ENCODE measurements at regions of chr17 and their contacts with region 1.

Region 1: GRCh38 chr17:45021607-45022287 is 29.7 kb downstream of the DCAKD start:
- DNase-seq: peak; percentile 67 to 87 (median 73)
- ATAC-seq: peak in 3 of 4 donors; percentile 80 to 82 (median 82)
- H3K4me3 ChIP-seq: peak overlapping the region in 11 of 12 donors; percentile 29 to 68 (median 46)
- H3K27ac ChIP-seq: peak overlapping the region in 11 of 12 donors; percentile 1 to 79 (median 68)
- H3K4me1 ChIP-seq: peaks cover 0 to 46% (median 31%) of the 10 kb centered on the region in 12 donors
- H3K27me3 ChIP-seq: peaks cover 0 to 27% (median 0%) of the 10 kb centered on the region in 9 donors
- CTCF ChIP-seq: peak; percentile 67 to 98 (median 96)
- POLR2A ChIP-seq: peak in 1 of 2 donors; percentile 14

Region 2: GRCh38 chr17:44900894-44901293 is 120.9 kb before region 1 on chr17:
- intact Hi-C with region 1: loop called in 1 of 10 experiments (anchors 5 kb)
- DNase-seq: no peak
- ATAC-seq: peak in 1 of 4 donors; percentile 5
- H3K4me3 ChIP-seq: no peak overlapping the region
- H3K27ac ChIP-seq: no peak overlapping the region
- H3K4me1 ChIP-seq: peaks cover 0 to 53% (median 24%) of the 10 kb centered on the region in 12 donors
- H3K27me3 ChIP-seq: no peaks in the 10 kb centered on the region
- CTCF ChIP-seq: no peak
- POLR2A ChIP-seq: no peak

Region 3: DNA sequence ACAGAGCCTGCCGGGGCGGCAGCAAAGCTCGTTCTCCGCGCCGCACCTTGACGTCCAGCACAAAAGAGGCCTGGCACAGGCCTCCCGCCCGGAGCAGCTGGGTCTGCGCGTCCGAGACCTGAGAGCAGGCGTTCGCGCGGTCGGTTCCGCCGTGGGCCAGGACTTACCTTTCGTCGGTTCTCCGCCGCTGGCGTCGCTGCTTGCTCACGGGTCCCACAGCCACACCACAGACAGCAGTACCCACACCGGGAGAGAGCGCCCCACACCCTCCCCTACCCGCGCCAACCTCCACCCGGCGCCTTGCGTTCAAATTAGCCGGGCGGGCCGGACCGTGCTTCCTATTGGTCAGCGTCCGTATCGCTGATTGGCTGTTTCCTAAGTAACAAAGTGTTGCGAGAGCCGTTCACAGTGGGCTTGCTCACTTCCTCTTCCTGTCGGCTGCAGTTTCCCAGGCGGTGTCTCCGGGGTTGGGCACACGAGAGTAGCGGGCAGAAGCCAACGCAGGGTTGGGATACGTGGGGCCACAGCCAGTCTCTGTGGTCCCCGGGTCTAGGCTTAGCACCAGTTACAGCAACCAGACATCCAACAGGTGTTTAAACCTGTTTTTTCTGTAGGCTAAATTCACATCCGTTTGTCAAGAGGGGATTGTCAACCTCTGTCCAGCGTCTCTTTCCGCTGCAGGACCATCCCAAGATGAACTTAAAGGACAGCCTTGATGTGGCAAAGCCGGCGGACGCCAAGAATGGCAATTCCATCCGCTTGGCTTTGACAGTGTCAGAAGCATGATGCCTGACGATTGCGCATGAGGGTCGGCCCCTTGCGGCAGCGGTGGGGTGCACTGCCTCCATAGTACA is 74.1 kb before region 1 on chr17 and contains the start of gene KIF18B:
- intact Hi-C with region 1: loop called in 1 of 10 experiments (anchors 2 kb)
- DNase-seq: peak; percentile 89 to 91 (median 90)
- ATAC-seq: peak; percentile 93 to 100 (median 100)
- H3K4me3 ChIP-seq: peak within 1 kb of the TSS; percentile 22 to 80 (median 59)
- H3K27ac ChIP-seq: peak within 1 kb of the TSS in 10 of 12 donors; percentile 19 to 73 (median 62)
- H3K4me1 ChIP-seq: peaks cover 0 to 22% (median 9%) of the 10 kb centered on the region in 12 donors
- H3K27me3 ChIP-seq: no peaks in the 10 kb centered on the region
- CTCF ChIP-seq: no peak
- POLR2A ChIP-seq: peak in 1 of 2 donors; percentile 88
- total RNA-seq, gene KIF18B: 0.06 to 5.4 (median 0.44) TPM in 8 of 9 donors, not detected in the other

Region 4: DNA sequence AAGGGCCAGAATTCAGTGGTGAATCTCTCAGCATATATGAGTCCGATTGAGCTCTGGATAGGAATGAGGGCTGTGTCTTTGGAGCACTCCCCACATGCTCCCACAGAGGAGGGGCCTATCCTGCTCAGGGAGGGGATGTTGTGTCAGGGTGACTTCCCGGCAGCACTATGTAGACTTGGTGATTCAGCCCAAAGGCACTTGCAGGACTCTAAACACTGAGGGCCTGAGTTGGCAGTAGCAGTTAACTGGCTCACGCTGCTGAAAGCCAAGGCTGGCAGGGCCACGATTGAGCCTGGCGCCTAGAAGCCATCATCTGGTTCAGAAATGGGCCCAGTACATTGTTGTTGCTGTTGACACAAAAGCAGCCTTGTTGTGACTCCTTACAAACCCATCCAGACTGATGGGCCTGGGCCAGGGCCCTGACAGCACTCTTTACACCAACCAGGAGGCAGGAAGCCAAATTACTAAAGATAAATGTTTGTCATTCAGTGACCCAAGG is 71.2 kb after region 1 on chr17:
- intact Hi-C with region 1: loop called in 3 of 10 experiments (anchors 5 to 10 kb)
- DNase-seq: peak; percentile 79 to 91 (median 82)
- ATAC-seq: peak; percentile 94 to 97 (median 96)
- H3K4me3 ChIP-seq: no peak overlapping the region
- H3K27ac ChIP-seq: peak overlapping the region; percentile 70 to 97 (median 88)
- H3K4me1 ChIP-seq: peaks cover 12 to 41% (median 26%) of the 10 kb centered on the region in 12 donors
- H3K27me3 ChIP-seq: no peaks in the 10 kb centered on the region
- CTCF ChIP-seq: no peak
- POLR2A ChIP-seq: no peak